ENCODE measurements at regions of chr20 and their contacts with region 1.

Region 1: DNA sequence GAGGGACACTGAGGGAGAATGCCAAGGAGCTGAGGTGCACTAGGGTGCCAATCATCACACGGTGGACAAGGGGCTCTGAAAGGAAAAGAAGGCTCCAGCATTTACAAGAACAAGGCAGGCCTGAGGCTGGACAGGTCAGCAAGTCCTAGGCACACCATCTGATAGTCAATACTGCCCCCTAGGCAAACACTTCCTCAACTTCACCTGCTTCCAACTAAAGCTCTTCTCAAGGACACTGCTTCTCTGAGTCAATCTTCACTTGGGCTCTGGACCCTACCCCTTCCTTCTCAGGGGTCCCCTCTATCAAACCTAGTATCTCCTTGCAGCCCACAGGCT is 37.7 kb upstream of the SLC4A11 start:
- DNase-seq: peak; percentile 4
- H3K4me3 Mint-ChIP-seq: no peak overlapping the region
- H3K27ac Mint-ChIP-seq: no peak overlapping the region
- H3K4me1 Mint-ChIP-seq: no peaks in the 10 kb centered on the region
- H3K27me3 Mint-ChIP-seq: no peaks in the 10 kb centered on the region
- CTCF ChIP-seq: no peak

Region 2: GRCh38 chr20:3218307-3218988 is 58.2 kb before region 1 on chr20:
- CTCF ChIA-PET with region 1: interaction called, 3 read pairs
- intact Hi-C with region 1: loop called (anchors 5 kb)
- DNase-seq: peak; percentile 78
- H3K4me3 Mint-ChIP-seq: no peak overlapping the region
- H3K27ac Mint-ChIP-seq: no peak overlapping the region
- H3K4me1 Mint-ChIP-seq: peaks cover 8% of the 10 kb centered on the region
- H3K27me3 Mint-ChIP-seq: no peaks in the 10 kb centered on the region
- CTCF ChIP-seq: peak; percentile 89

Measured in Calu3 (cell line).